Activated CD8-positive, alpha-beta T cell treated with anti-CD3 and anti-CD28 coated beads, Interleukin-2, amount 10 ng/mL, durations not matched to agents 7 days and 5 days (primary cell): ENCODE measurements at regions of chr1 and their contacts with region 1.

Region 1: GRCh38 chr1:74771913-74772515 is 39.1 kb downstream of the TYW3 start:
- DNase-seq: peak; percentile 31
- ATAC-seq: no peak
- H3K4me3 Mint-ChIP-seq: no peak overlapping the region
- H3K27ac Mint-ChIP-seq: no peak overlapping the region
- H3K4me1 Mint-ChIP-seq: no peaks in the 10 kb centered on the region
- H3K27me3 Mint-ChIP-seq: peaks cover 7% of the 10 kb centered on the region

Region 2: GRCh38 chr1:74811436-74812179 is 39.6 kb after region 1 on chr1:
- CTCF ChIA-PET with region 1: no interaction called
- POLR2A ChIA-PET with region 1: no interaction called
- DNase-seq: no peak
- ATAC-seq: no peak
- H3K4me3 Mint-ChIP-seq: no peak overlapping the region
- H3K27ac Mint-ChIP-seq: no peak overlapping the region
- H3K4me1 Mint-ChIP-seq: no peaks in the 10 kb centered on the region
- H3K27me3 Mint-ChIP-seq: no peaks in the 10 kb centered on the region

Region 3: GRCh38 chr1:75203415-75204277 is 431.6 kb after region 1 on chr1:
- CTCF ChIA-PET with region 1: interaction called, 14 read pairs
- POLR2A ChIA-PET with region 1: no interaction called
- DNase-seq: no peak
- ATAC-seq: no peak
- H3K4me3 Mint-ChIP-seq: no peak overlapping the region
- H3K27ac Mint-ChIP-seq: no peak overlapping the region
- H3K4me1 Mint-ChIP-seq: no peaks in the 10 kb centered on the region
- H3K27me3 Mint-ChIP-seq: no peaks in the 10 kb centered on the region